Left ventricle myocardium inferior (tissue), 1 donor: ENCODE measurements at regions of chr18 and their contacts with region 1.

Region 1: DNA sequence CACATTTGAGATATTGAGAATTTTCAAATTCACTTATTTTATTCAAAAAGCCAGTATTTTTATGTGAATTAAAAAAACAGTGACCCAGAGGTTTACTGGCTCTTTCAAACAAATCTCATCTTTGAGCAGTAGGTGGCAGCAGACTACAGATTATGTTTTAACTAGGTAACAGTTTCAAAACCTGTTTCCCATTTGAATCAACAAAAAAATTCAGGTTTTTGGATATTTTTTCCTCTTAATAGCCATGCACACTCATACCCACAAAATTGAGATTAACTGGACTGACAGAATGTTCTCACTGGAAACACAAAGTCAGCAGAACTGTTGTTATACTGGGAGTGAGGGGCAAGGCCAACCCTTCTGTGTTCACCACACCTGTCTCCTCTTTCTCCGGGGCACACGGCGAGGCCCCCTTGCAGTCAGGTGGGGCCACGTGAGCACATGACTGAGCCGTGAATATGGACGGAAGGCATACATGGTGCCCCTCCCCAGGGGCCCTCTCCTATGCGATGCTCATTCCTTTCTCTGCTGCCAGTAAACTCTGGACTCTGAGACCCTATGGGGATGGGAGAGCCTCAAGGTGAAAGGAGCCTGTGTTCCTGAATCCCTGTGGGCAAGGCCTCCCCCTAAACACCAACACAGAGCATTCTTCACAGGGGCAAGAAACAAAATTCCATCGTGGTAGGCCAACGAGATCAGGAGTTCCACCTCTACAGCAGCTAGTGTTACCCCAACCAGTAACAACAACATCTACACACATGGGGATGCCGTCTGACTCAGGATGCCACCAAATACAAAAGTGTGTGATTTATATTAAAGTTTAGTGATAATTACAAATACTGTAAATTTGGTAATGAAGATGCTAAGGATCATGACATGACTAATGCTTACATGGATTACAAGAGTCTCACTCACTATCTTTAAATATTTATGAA is 80.4 kb downstream of the LPIN2 start:
- DNase-seq: no peak
- H3K4me3 ChIP-seq: no peak overlapping the region
- H3K27ac ChIP-seq: no peak overlapping the region
- H3K4me1 ChIP-seq: peaks cover 7% of the 10 kb centered on the region
- H3K27me3 ChIP-seq: no peaks in the 10 kb centered on the region
- CTCF ChIP-seq: peak; percentile 82

Region 2: GRCh38 chr18:2881088-2881839 is 51.2 kb before region 1 on chr18:
- intact Hi-C with region 1: no loop called
- DNase-seq: peak; percentile 54
- H3K4me3 ChIP-seq: no peak overlapping the region
- H3K27ac ChIP-seq: peak overlapping the region; percentile 74
- H3K4me1 ChIP-seq: peaks cover 39% of the 10 kb centered on the region
- H3K27me3 ChIP-seq: no peaks in the 10 kb centered on the region
- CTCF ChIP-seq: no peak

Region 3: GRCh38 chr18:3062798-3063680 is 130.5 kb after region 1 on chr18:
- intact Hi-C with region 1: loop called (anchors 5 kb)
- DNase-seq: peak; percentile 58
- H3K4me3 ChIP-seq: no peak overlapping the region
- H3K27ac ChIP-seq: no peak overlapping the region
- H3K4me1 ChIP-seq: peaks cover 15% of the 10 kb centered on the region
- H3K27me3 ChIP-seq: no peaks in the 10 kb centered on the region
- CTCF ChIP-seq: peak; percentile 86

Region 4: GRCh38 chr18:3135536-3135935 is 203.0 kb after region 1 on chr18:
- intact Hi-C with region 1: loop called (anchors 10 kb)
- DNase-seq: no peak
- H3K4me3 ChIP-seq: no peak overlapping the region
- H3K27ac ChIP-seq: peak overlapping the region; percentile 15
- H3K4me1 ChIP-seq: peaks cover 56% of the 10 kb centered on the region
- H3K27me3 ChIP-seq: no peaks in the 10 kb centered on the region
- CTCF ChIP-seq: no peak

Region 5: DNA sequence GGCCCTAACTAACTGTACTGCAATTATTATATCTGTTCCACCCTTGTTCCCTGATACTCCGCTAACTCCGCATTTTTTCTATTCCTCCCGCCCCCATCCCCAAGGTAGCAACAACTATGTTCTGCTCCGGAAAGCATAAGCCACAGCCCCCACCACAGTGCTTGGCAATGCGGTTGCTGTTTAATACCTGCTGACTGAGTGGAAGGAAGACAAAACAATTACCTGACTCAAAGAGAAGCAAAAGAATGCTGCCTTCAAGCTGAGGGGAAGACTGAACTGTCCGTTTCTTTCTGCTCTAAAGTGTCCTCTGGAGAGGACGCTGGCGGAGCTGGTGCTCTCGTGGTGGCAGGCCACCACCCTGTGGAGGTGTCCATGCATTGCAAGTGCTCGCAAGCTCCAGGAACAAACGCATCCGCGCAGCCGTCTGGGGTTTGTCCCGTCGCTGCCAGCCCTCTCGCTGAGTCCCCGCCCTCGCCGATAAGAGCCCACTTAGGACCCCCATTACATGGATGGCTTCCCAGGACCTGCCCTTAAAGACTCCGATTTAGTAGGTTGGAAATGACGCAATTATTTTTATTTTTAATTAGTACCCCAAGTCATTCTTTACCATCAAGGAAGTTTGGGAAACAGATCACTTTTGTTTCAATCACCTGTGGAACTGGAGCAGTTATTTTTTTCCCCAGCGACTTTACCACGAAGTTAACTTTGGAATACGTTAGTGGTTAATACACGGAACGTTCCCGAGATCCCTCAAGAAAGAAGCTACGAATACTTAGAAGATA is 313.5 kb after region 1 on chr18:
- intact Hi-C with region 1: loop called (anchors 10 kb)
- DNase-seq: peak; percentile 89
- H3K4me3 ChIP-seq: peak overlapping the region; percentile 98
- H3K27ac ChIP-seq: peak overlapping the region; percentile 100
- H3K4me1 ChIP-seq: peaks cover 62% of the 10 kb centered on the region
- H3K27me3 ChIP-seq: no peaks in the 10 kb centered on the region
- CTCF ChIP-seq: peak; percentile 98